ENCODE measurements at regions of chr14 and their contacts with region 1.

Region 1: GRCh38 chr14:100440187-100440631 is 117.1 kb downstream of the SLC25A47 start:
- DNase-seq: peak; percentile 79 to 84
- H3K4me3 ChIP-seq: no peak overlapping the region
- H3K27ac ChIP-seq: peak overlapping the region; percentile 79 to 83
- H3K4me1 ChIP-seq: peaks cover 8 to 17% of the 10 kb centered on the region in 2 donors
- H3K27me3 ChIP-seq: no peaks in the 10 kb centered on the region
- CTCF ChIP-seq: peak; percentile 68 to 84 (median 75)
- POLR2A ChIP-seq: no peak

Region 2: GRCh38 chr14:100547633-100548294 is 107.6 kb after region 1 on chr14:
- intact Hi-C with region 1: no loop called
- DNase-seq: peak; percentile 63 to 79
- H3K4me3 ChIP-seq: no peak overlapping the region
- H3K27ac ChIP-seq: peak overlapping the region in 1 of 2 donors; percentile 83
- H3K4me1 ChIP-seq: peaks cover 0 to 7% of the 10 kb centered on the region in 2 donors
- H3K27me3 ChIP-seq: no peaks in the 10 kb centered on the region
- CTCF ChIP-seq: no peak
- POLR2A ChIP-seq: no peak

Region 3: DNA sequence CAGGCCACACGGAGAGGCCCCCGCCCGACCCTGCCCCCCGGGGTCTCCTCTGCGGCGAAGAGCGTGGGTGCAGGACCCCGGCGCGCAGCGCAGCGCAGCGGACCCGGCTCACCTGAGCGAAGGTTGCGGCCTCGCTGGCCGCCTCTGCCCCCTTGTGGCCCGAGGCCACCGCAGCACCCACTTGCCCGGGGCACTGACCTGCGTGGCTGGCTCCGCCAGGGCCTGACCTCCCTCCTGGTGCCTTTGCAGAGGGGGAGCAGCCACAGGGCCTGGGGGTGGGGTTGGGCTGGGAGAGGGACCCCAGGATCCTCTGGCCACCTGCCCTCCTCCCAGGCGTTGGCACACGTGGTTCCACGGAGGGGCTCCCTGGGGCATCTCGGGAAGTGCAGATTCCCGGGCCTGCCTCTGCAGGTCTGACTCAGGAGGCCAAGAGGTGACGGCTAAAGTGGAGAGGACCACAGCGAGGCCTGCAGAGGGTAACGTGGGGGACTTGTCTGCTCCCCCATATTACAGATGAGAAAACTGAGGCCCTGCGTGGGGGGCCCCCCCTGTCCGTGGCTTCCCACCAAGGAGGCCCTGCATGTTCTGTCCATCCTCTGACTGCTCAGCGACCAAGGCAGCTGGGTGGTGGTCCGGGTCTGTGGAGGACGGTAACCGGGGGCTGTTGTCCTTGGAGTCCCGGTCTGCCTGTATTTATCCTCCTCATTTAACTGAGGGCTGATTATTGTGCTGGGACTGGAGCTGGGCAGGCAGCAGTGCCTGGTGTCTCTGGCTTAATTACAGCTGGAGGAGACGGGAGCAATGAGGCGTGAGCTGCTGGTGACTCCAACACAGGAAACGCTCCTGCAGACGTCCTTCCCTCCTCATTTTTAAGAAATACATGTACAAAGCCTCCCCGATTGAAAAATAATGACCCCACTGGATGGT is 214.9 kb after region 1 on chr14:
- intact Hi-C with region 1: loop called (anchors 10 kb)
- DNase-seq: no peak
- H3K4me3 ChIP-seq: no peak overlapping the region
- H3K27ac ChIP-seq: no peak overlapping the region
- H3K4me1 ChIP-seq: no peaks in the 10 kb centered on the region
- H3K27me3 ChIP-seq: peaks cover 0 to 8% of the 10 kb centered on the region in 2 donors
- CTCF ChIP-seq: peak; percentile 19 to 63 (median 54)
- POLR2A ChIP-seq: no peak

Measured in uterus (tissue), 4 donors.